Heart right ventricle (tissue), 16 donors: ENCODE measurements at regions of chr20 and their contacts with region 1.

Region 1: GRCh38 chr20:58598211-58599014 is 52.7 kb upstream of the STX16 start:
- DNase-seq: peak in 1 of 2 donors; percentile 48
- ATAC-seq: peak; percentile 26 to 73 (median 51)
- H3K4me3 ChIP-seq: no peak overlapping the region
- H3K27ac ChIP-seq: peak overlapping the region in 3 of 10 donors; percentile 52 to 72 (median 62)
- H3K4me1 ChIP-seq: peaks cover 0 to 14% (median 0%) of the 10 kb centered on the region in 9 donors
- H3K27me3 ChIP-seq: peaks cover 0 to 10% (median 0%) of the 10 kb centered on the region in 7 donors
- CTCF ChIP-seq: no peak

Region 2: GRCh38 chr20:58538752-58539151 is 59.7 kb before region 1 on chr20:
- intact Hi-C with region 1: loop called in 1 of 10 experiments (anchors 10 kb)
- DNase-seq: no peak
- ATAC-seq: no peak
- H3K4me3 ChIP-seq: no peak overlapping the region
- H3K27ac ChIP-seq: no peak overlapping the region
- H3K4me1 ChIP-seq: no peaks in the 10 kb centered on the region
- H3K27me3 ChIP-seq: no peaks in the 10 kb centered on the region
- CTCF ChIP-seq: no peak